ENCODE measurements at regions of chr4 and their contacts with region 1.

Region 1: GRCh38 chr4:16642895-16643294 is 255.6 kb downstream of the LDB2 start:
- DNase-seq: peak; percentile 53
- H3K4me3 ChIP-seq: no peak overlapping the region
- H3K27ac ChIP-seq: no peak overlapping the region
- H3K4me1 ChIP-seq: peaks cover 38% of the 10 kb centered on the region
- H3K27me3 ChIP-seq: no peaks in the 10 kb centered on the region
- CTCF ChIP-seq: peak; percentile 56

Region 2: DNA sequence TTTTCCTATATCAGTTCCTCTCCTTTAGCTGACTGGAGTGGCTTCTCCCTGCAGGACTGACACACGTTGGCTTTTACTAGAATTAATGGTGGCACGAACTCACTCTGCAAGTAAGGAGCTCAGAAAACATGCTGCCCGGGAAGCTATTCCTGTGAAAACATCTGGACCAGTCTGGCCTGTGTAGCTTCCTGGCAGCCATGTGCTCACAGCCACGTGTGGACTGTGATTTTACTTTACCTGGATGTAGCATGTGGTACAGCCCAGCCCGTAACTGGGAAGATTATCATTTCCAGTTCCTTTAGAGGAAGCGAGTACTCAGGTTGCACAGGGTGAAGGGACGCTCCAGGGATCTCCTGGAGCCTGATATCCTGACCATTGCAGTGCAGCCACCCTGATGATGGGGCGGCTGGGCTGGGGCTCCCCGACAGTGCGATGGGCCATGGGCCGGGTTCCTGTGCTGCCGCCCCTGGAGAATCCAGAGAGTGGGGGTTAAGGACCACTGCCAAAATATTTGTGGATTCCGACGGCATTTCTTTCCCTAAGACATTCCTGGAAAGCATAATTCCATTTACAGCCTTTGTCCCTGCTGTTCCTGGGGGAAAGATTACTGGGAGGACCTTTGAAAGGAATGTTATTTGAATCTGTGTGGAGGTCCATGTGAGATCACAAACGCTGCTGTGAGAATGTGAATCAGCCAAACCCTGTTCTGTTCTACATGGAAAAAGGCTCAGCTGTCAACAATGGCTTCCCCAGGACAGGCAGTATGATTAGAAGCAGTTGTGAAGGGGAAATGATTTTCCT is 594.1 kb before region 1 on chr4:
- CTCF ChIA-PET with region 1: no interaction called
- POLR2A ChIA-PET with region 1: no interaction called
- intact Hi-C with region 1: no loop called
- DNase-seq: no peak
- H3K4me3 ChIP-seq: no peak overlapping the region
- H3K27ac ChIP-seq: no peak overlapping the region
- H3K4me1 ChIP-seq: peaks cover 13% of the 10 kb centered on the region
- H3K27me3 ChIP-seq: no peaks in the 10 kb centered on the region
- CTCF ChIP-seq: no peak

Region 3: GRCh38 chr4:16472537-16472936 is 170.4 kb before region 1 on chr4:
- CTCF ChIA-PET with region 1: no interaction called
- POLR2A ChIA-PET with region 1: no interaction called
- intact Hi-C with region 1: no loop called
- DNase-seq: no peak
- H3K4me3 ChIP-seq: no peak overlapping the region
- H3K27ac ChIP-seq: no peak overlapping the region
- H3K4me1 ChIP-seq: peaks cover 2% of the 10 kb centered on the region
- H3K27me3 ChIP-seq: no peaks in the 10 kb centered on the region
- CTCF ChIP-seq: no peak

Region 4: GRCh38 chr4:16583764-16584163 is 59.1 kb before region 1 on chr4:
- CTCF ChIA-PET with region 1: no interaction called
- POLR2A ChIA-PET with region 1: no interaction called
- intact Hi-C with region 1: no loop called
- DNase-seq: no peak
- H3K4me3 ChIP-seq: no peak overlapping the region
- H3K27ac ChIP-seq: no peak overlapping the region
- H3K4me1 ChIP-seq: no peaks in the 10 kb centered on the region
- H3K27me3 ChIP-seq: no peaks in the 10 kb centered on the region
- CTCF ChIP-seq: no peak

Region 5: DNA sequence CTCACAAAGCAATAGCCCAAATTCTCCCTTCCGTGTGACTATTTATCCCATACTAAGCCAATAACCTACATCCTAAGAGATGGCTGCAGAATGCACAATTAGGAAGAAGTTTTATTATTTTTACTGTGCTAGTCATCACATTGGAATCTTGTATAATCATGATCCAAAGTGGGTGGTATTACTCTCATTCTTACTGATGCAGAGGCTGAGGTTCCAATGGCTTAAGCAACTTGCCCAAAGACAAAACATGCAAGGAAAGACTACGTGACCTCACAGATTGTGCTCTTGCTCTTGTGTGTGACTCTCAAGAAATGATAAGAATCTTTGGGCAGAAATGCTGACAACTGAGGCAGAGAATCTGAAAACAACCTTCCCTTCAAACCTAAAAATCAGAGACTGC is 43.3 kb after region 1 on chr4:
- CTCF ChIA-PET with region 1: interaction called, 10 read pairs
- POLR2A ChIA-PET with region 1: no interaction called
- intact Hi-C with region 1: no loop called
- DNase-seq: peak; percentile 81
- H3K4me3 ChIP-seq: no peak overlapping the region
- H3K27ac ChIP-seq: peak overlapping the region; percentile 59
- H3K4me1 ChIP-seq: peaks cover 93% of the 10 kb centered on the region
- H3K27me3 ChIP-seq: no peaks in the 10 kb centered on the region
- CTCF ChIP-seq: no peak

Region 6: DNA sequence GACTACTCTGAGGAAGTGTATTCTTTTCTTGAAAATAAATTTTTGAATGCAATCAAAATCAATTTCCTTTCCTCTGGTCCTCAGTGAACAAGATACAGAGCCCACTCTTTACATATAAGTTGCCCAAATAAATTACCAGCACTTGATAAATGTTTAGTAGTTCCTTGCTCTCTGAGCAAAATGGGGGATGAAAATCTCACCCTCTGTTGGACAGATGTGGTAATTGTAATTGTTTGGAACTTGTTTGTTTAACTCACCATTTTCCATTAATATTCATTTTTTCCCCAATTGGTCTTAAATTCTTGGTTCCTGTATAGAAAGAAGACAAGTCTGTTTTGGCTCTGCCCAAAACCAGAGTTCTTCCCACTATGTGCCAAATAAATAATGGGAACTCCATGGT is 109.3 kb after region 1 on chr4:
- CTCF ChIA-PET with region 1: no interaction called
- POLR2A ChIA-PET with region 1: no interaction called
- intact Hi-C with region 1: loop called (anchors 10 kb)
- DNase-seq: peak; percentile 50
- H3K4me3 ChIP-seq: no peak overlapping the region
- H3K27ac ChIP-seq: no peak overlapping the region
- H3K4me1 ChIP-seq: peaks cover 14% of the 10 kb centered on the region
- H3K27me3 ChIP-seq: no peaks in the 10 kb centered on the region
- CTCF ChIP-seq: peak; percentile 51

Region 7: DNA sequence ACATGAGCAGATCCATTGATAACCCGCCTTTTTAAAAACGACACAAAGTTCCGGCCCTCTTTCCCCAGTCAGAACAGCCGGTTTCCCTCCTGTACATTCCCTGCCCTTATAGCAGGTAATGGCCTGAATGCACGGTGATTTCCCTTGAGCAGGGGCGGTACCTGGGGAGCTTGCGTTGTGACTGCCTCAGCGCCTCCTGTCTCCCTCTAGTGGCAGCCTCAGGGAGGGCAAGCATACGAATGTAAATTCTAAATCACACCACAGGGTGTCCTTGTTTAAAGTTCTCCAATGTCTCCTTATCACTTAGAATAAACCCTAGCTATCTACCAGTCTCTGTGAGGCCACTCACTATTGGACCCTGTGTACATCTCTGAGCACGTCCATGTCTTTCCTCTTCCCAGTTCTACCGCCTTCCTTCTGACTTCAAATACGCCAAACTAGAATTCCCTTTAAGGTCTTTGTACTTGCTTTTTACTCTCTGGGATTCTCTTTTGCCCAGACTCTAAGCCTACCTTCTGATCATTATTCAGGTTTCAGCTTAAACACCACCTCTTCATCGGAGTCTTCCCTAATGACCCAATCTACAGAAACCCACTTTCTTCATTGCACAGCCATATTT is 273.9 kb after region 1 on chr4:
- CTCF ChIA-PET with region 1: interaction called, 6 read pairs
- POLR2A ChIA-PET with region 1: no interaction called
- intact Hi-C with region 1: loop called (anchors 10 kb)
- DNase-seq: peak; percentile 82
- H3K4me3 ChIP-seq: no peak overlapping the region
- H3K27ac ChIP-seq: no peak overlapping the region
- H3K4me1 ChIP-seq: no peaks in the 10 kb centered on the region
- H3K27me3 ChIP-seq: no peaks in the 10 kb centered on the region
- CTCF ChIP-seq: peak; percentile 97

Measured in A673 (cell line).